Left cardiac atrium (tissue), 4 donors: ENCODE measurements at regions of chr14 and their contacts with region 1.

Region 1: DNA sequence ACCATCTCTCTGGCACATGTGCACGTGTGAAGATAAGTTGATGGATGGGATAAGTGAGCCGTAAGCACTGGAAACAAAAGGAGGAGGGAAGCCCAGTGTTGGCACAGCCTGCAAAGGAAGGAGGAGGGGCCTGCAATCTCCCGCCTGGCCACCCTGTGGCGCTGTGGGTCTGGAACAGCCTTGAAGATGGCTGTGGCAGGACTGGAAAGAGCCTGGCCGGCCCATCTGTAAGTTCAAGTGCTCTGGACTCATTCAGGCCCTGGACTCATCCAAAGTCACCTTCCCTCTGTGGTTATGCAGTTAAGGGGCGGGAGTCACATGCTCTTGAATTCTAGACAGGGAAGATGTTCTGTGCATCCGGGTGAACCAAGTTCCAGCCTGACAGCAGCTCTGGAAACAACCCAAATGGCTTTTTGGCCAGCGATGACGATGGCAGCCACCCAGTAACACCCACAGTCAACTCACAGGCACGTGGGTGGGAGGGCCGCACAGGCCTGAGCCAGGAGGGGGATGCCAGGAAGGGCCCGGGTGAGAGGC is 50.4 kb downstream of the CHGA start:
- DNase-seq: peak; percentile 69
- ATAC-seq: peak; percentile 85 to 89

Region 2: GRCh38 chr14:93009471-93010129 is 36.3 kb after region 1 on chr14:
- intact Hi-C with region 1: loop called in 1 of 2 experiments (anchors 2 kb)
- DNase-seq: peak; percentile 58
- ATAC-seq: peak; percentile 20 to 46